ENCODE measurements at regions of chr3 and their contacts with region 1.

Region 1: DNA sequence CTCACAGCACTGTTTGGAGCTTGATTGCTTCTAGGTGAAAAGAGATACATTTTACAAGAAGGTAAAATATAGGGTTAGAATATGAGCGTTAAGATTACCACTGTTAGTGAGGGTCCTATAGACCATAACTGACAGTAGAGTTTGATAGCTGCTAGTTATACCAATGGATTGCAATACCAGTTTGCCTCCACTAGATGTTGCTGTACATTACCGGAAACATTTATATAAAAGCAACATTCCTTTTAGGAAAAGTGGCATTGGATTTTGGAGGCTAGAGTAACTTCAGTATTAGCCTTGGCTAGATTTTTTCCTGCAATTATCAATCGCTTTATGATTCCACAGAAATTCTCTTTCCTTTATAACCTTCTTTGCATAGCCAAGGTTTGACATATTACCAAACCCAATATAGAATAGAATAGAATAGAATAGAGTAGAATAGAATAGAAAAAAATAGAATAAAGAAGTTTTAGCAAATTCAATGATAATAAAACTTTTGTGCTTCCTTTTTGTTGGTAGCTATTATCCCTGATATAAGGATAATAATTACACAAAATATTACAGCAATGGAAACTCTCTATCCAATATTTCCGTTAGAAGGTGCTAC is 1093.6 kb upstream of the ALCAM start:
- DNase-seq: peak; percentile 17
- H3K4me3 ChIP-seq: no peak overlapping the region
- H3K27ac ChIP-seq: no peak overlapping the region
- H3K4me1 ChIP-seq: no peaks in the 10 kb centered on the region
- H3K27me3 ChIP-seq: no peaks in the 10 kb centered on the region
- CTCF ChIP-seq: peak; percentile 80 to 84

Region 2: GRCh38 chr3:103919327-103919726 is 353.8 kb before region 1 on chr3:
- CTCF ChIA-PET with region 1: no interaction called
- dilution Hi-C with region 1: no loop called
- in situ Hi-C with region 1: no loop called
- intact Hi-C with region 1: no loop called
- DNase-seq: no peak
- H3K4me3 ChIP-seq: no peak overlapping the region
- H3K27ac ChIP-seq: no peak overlapping the region
- H3K4me1 ChIP-seq: no peaks in the 10 kb centered on the region
- H3K27me3 ChIP-seq: peaks cover 2% of the 10 kb centered on the region
- CTCF ChIP-seq: no peak

Region 3: GRCh38 chr3:104132566-104133403 is 140.4 kb before region 1 on chr3:
- CTCF ChIA-PET with region 1: no interaction called
- dilution Hi-C with region 1: no loop called
- in situ Hi-C with region 1: no loop called
- intact Hi-C with region 1: no loop called
- DNase-seq: no peak
- H3K4me3 ChIP-seq: no peak overlapping the region
- H3K27ac ChIP-seq: no peak overlapping the region
- H3K4me1 ChIP-seq: no peaks in the 10 kb centered on the region
- H3K27me3 ChIP-seq: no peaks in the 10 kb centered on the region
- CTCF ChIP-seq: no peak

Region 4: GRCh38 chr3:104596551-104596950 is 323.4 kb after region 1 on chr3:
- CTCF ChIA-PET with region 1: no interaction called
- dilution Hi-C with region 1: no loop called
- in situ Hi-C with region 1: no loop called
- intact Hi-C with region 1: loop called (anchors 10 kb)
- DNase-seq: peak; percentile 42
- H3K4me3 ChIP-seq: no peak overlapping the region
- H3K27ac ChIP-seq: no peak overlapping the region
- H3K4me1 ChIP-seq: no peaks in the 10 kb centered on the region
- H3K27me3 ChIP-seq: no peaks in the 10 kb centered on the region
- CTCF ChIP-seq: peak; percentile 60 to 68